ENCODE measurements at regions of chr22 and their contacts with region 1.

Region 1: GRCh38 chr22:32411829-32412592 is at the start of gene RTCB:
- DNase-seq: peak; percentile 94
- ATAC-seq: peak; percentile 89
- total RNA-seq, gene RTCB: 37.6 TPM

Region 2: DNA sequence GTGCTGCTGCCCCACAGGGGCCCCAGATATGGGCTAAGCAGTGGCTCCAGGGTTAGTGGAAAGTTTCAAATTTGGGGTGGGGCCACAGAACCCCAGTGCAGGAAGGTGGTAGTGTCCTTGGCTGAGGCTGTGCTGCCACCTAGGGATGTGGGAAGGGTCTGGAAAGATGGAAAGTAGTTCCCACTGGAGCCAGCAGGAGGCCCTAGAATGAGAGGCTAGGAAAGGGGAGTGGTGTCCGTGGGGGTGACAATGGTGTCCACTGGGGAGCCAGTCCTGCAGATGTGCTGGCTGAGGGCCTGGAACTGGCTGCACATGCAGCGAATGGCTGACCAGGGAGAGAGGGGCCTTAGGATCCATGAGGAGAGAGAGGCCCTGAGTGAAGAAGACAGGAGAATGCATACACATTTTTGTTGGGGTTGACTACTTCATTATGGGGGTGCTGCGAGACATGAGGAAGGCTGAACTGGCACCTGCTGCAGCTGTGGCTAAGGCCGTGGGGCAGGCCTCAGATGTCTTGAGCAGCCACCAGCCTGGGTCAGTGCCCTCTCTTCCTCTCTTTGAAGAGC is 33.2 kb before region 1 on chr22:
- intact Hi-C with region 1: no loop called
- DNase-seq: no peak
- ATAC-seq: no peak

Region 3: GRCh38 chr22:32474635-32475467 is 62.8 kb after region 1 on chr22 and contains the start of gene FBXO7:
- intact Hi-C with region 1: loop called (anchors 2 kb)
- DNase-seq: peak; percentile 97
- ATAC-seq: peak; percentile 92
- total RNA-seq, gene FBXO7: 35.8 TPM

Measured in Right ventricle myocardium inferior (tissue), 1 donor.